GM10248 (cell line): ENCODE measurements at regions of chr1 and their contacts with region 1.

Region 1: GRCh38 chr1:206030714-206031113 is 7.0 kb upstream of the CTSE start:
- DNase-seq: peak; percentile 62
- CTCF ChIP-seq: peak; percentile 92

Region 2: GRCh38 chr1:205913451-205914155 is 117.1 kb before region 1 on chr1:
- CTCF ChIA-PET with region 1: no interaction called
- POLR2A ChIA-PET with region 1: no interaction called
- DNase-seq: no peak
- CTCF ChIP-seq: no peak

Region 3: GRCh38 chr1:206041640-206042039 is 10.9 kb after region 1 on chr1:
- CTCF ChIA-PET with region 1: interaction called, 115 read pairs
- POLR2A ChIA-PET with region 1: no interaction called
- DNase-seq: no peak
- CTCF ChIP-seq: no peak

Region 4: DNA sequence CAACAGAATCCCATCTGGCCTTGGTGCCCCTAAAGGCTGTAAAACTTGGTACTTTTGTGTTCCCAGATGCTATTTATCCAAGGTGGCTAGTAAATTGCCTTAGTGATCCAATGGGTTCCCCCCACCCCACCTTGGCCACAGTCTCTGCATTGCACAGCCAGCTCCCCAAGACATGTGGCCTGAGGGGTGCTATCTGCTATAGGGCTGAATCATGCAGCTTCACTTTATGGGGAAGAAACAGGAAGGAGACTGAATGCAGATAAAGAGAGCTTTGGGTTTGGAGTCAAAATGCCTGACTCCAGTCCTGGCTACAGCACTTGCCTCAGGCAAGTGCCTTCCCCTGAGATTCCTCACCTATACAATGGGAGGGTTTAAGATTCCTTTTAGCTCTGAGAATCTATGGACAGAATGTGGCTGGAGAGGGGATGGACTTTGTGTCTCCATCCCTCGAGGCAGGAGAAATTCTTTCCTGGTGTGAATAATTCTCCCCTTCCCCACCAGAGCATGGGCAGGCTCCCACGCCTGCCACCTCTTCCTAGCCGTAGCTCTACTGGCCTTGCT is 28.7 kb after region 1 on chr1:
- CTCF ChIA-PET with region 1: interaction called, 17 read pairs
- POLR2A ChIA-PET with region 1: no interaction called
- DNase-seq: no peak
- CTCF ChIP-seq: no peak

Region 5: DNA sequence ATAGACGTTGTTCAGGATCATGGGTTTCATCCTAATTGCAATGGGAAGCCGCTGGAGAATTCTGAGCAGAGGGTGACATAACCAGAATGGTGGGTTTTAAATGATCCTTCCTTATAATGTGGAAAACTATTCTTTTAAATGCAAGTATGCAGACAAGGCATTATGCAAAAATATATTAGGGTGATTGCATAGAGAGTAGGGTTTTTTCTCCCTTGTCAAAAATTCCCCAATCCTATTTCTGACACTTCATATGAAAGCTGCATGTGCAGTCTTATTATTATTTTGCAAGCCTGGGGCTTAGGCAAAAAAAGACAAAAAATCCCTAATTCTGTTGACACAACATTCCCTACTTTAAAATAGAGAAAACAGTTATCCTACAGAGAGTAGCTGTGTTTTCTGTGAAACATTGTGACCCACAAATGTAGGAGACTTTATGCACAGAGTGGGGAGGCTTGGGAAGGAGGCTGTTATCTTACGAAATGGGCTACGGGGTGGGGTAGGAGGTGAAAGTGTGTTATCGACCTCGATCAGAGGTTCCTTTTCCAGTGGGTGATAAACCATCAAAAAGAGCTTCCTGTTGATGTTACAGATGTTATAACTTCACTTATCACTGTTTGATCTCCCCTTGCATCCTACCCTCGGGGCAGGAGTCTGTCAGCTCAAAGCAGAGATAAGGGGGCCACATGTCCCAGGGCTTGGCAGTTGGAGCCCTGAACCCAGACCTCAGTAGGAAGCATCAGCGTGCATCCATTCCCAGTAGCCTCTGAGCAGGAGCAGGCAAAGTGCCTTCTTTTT is 49.5 kb after region 1 on chr1:
- CTCF ChIA-PET with region 1: interaction called, 20 read pairs
- POLR2A ChIA-PET with region 1: no interaction called
- DNase-seq: no peak
- CTCF ChIP-seq: no peak